Right ventricle myocardium inferior (tissue), 1 donor: ENCODE measurements at regions of chr6 and their contacts with region 1.

Region 1: DNA sequence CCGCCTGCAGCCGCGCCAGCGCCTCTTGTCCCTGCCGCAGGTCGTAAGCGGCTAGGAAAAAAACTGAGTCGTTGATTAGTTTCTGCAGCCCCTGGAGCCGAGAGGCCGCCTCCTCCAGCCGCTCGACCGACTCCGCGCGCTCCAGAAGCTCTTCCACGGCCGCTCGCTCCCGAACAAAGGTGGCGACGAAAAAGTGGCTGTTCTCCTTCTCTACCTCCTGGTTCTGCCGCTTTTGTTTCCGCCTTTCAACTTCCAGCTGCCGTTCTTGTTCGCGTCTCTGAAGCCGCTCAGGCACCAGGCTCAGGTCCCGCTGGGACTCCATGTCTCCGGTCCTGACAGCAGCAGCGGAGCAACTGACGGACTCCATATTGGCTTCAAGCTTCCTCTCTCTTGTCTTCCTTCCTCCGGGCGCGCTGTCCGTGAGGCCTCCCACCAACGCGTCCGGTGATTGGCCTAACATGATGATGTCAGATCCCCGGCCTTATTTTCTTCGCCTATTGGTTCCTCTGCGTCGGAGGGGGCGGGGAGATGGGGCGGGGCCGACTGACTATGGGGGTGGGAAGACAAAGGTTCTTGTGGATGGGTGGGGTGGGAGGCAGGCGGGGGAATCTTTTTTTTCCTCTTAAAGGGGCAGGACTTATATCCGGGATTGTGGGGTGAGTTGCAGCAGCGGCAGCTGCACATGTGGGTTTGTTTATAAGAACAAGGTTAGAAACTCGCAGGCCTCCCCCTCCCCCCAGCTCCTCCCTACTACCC is at the start of gene TBCC:
- DNase-seq: peak; percentile 96
- ATAC-seq: peak; percentile 95
- total RNA-seq, gene TBCC: 12.0 TPM

Region 2: GRCh38 chr6:42563697-42564505 is 182.0 kb before region 1 on chr6 and contains the start of gene UBR2:
- intact Hi-C with region 1: loop called (anchors 10 kb)
- DNase-seq: peak; percentile 98
- ATAC-seq: peak; percentile 99
- total RNA-seq, gene UBR2: 31.3 TPM

Region 3: DNA sequence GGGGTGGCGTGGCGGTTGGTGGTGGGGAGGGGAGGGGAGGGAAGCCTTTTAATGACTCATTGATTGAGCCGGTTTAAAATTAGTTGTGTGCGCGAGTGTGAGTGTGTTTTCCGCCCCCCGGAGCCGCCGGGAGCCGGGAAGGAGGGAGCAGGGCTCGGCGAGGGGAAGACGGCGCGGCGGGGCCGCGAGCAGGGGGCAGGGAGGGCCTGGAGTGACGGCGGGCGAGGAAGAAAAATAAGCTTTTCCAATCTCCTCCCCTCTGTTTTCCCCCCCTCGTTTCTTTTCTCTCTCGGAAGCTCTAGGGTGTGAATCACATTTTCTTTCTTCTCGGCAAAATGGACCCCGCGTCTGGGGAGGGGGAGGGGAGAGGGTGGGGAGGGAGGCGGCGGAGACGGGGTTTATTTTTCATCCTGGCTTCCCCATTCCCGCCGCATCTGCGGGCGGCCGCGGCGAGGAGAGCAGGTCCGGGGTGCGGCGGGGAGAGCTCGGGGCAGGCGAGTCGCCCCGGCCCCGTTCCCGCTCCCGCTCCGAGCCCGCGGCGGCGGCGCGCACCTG is 36.8 kb after region 1 on chr6:
- intact Hi-C with region 1: loop called (anchors 1 kb)
- DNase-seq: peak; percentile 88
- ATAC-seq: peak; percentile 83